Activated CD4-positive, alpha-beta T cell treated with anti-CD3 and anti-CD28 coated beads for 36 hours (primary cell): ENCODE measurements at regions of chr19 and their contacts with region 1.

Region 1: DNA sequence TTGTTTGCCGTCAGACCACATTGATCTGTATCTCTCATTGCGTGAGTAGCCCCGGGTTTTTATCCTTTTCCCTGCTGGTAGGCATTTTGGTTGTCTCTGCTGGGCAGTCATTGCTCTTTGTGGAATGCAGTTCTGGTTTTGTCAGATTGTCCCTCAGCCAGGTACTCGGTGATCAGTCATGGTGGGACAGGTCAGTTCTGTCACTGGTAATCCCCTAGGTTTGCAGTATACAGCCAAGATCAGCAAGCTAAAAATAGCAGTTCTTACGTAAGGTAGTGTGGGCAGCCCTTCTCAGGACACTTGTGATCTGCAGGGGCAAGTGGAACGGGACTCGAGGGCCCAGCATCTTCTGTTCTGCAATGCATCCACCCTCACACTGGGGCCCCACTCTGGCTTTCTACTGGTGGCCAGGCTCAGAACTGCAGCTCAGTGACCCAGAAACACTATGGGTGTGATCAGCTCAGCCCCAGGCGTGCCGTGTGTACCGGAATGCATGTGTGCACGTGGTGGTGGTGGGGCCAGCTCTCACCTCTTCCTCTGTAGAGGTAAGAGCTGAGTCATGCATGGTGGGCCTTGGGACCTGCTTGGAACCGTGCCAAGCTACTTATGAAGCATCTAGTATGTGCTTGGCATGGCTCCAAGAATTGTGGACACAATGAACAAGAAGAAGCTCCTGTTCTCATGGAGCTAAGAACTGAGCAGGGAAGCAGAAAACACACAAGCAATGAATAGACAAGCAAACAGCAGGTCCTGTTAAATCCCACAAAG is 6.3 kb downstream of the PLEKHF1 start:
- DNase-seq: peak; percentile 94
- ATAC-seq: peak; percentile 70
- H3K4me3 Mint-ChIP-seq: peak overlapping the region; percentile 59
- H3K27ac Mint-ChIP-seq: peak overlapping the region; percentile 96
- H3K4me1 Mint-ChIP-seq: peaks cover 90% of the 10 kb centered on the region
- H3K27me3 Mint-ChIP-seq: no peaks in the 10 kb centered on the region

Region 2: DNA sequence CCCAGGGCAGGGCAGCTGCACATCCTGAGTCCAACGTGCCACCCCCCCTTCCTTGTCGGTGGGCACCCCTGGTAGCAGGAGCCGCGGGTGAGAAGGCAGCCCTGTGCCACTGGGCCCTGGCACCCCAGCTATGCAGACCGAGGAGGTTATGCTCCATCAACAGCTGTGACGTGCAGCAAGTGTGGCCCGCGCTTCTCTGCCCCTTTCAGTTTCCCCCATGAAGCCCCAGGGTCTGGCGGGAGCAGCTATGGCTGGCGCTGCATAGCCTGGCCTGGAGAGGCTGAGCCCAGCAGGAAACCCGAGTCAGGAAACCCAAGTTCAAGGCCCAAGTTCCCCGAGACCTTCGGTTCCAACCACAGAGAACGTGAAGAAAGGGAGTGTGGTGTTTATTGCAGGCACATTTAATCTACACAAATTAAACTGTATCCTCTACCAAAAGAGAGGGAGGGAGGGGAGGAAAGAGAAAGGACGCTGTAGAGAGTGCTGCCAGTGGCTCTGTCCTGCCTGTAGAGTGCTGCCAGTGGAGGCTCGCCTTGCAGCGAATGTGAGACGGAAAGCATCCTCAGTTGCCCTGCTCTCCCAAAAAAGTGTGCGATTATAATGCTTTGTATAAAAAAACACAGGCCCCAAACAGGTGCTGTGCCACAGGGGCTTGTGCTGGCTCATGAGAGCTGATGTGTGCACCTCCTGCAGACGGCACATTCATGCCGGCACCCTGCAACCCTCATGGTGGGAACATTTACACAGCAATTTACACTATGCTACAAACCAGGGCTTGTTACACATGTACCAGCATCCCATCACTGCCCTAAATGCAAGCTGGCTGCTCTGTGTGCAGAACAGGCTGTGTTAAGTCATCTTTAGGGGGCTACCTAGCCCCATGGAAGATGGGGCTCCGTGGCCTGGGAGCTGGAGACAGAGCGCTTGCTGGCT is 49.2 kb before region 1 on chr19:
- CTCF ChIA-PET with region 1: interaction called, 13 read pairs
- POLR2A ChIA-PET with region 1: no interaction called
- intact Hi-C with region 1: loop called (anchors 1 to 2 kb)
- DNase-seq: peak; percentile 65
- ATAC-seq: peak; percentile 53
- H3K4me3 Mint-ChIP-seq: peak overlapping the region; percentile 20
- H3K27ac Mint-ChIP-seq: peak overlapping the region; percentile 63
- H3K4me1 Mint-ChIP-seq: peaks cover 51% of the 10 kb centered on the region
- H3K27me3 Mint-ChIP-seq: no peaks in the 10 kb centered on the region

Region 3: GRCh38 chr19:29687244-29687896 is 15.8 kb after region 1 on chr19:
- CTCF ChIA-PET with region 1: interaction called, 18 read pairs
- POLR2A ChIA-PET with region 1: interaction called, 13 read pairs
- intact Hi-C with region 1: loop called (anchors 1 to 2 kb)
- DNase-seq: peak; percentile 84
- ATAC-seq: peak; percentile 87
- H3K4me3 Mint-ChIP-seq: no peak overlapping the region
- H3K27ac Mint-ChIP-seq: peak overlapping the region; percentile 86
- H3K4me1 Mint-ChIP-seq: peaks cover 51% of the 10 kb centered on the region
- H3K27me3 Mint-ChIP-seq: no peaks in the 10 kb centered on the region

Region 4: DNA sequence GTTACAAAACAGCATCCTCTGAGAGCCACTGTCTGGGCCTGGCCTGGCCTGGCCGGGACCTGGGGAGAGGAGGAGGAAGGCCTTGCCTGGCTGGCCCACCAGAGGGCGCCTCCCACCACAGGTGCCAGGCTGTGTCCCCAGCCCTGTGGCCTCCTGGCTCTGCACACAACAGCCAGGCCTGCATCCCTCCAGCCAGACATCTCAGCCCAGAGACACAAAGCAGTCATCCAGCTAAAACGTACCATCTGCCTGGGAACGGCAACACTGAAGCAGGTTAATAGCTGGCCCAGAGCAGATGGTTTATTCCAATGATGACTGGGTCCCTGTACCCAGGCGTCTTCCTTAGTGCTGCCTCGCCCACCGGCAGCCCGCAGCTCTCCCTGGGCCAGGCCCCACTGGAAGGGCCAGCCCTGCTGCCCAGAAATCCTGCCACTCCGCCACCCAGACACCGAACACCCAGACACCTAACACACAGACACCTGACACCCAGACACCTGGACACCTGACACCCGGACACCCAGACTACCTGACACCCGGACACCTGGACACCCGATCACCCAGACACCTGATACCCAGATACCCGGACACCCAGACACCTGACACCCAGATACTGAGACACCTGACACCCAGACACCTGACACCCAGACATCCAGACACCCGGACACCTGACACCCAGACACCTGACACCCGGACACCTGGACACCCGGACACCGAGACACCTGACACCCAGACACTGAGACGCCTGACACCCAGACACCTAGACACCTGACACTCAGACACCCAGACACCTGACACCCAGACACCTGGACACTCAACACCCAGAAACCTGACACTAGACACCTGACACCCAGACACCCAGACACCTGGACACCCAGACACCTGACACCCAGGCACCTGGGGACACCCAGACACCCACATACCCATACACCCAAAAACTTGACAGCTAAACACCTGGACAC is 23.4 kb after region 1 on chr19:
- CTCF ChIA-PET with region 1: interaction called, 17 read pairs
- POLR2A ChIA-PET with region 1: no interaction called
- intact Hi-C with region 1: no loop called
- DNase-seq: peak; percentile 92
- ATAC-seq: peak; percentile 97
- H3K4me3 Mint-ChIP-seq: no peak overlapping the region
- H3K27ac Mint-ChIP-seq: peak overlapping the region; percentile 53
- H3K4me1 Mint-ChIP-seq: peaks cover 12% of the 10 kb centered on the region
- H3K27me3 Mint-ChIP-seq: no peaks in the 10 kb centered on the region

Region 5: GRCh38 chr19:29704562-29705558 is 33.3 kb after region 1 on chr19:
- CTCF ChIA-PET with region 1: interaction called, 4 read pairs
- POLR2A ChIA-PET with region 1: interaction called, 3 read pairs
- intact Hi-C with region 1: loop called in 1 of 2 experiments (anchors 1 kb)
- DNase-seq: peak; percentile 51
- ATAC-seq: peak; percentile 90
- H3K4me3 Mint-ChIP-seq: peak overlapping the region; percentile 26
- H3K27ac Mint-ChIP-seq: peak overlapping the region; percentile 97
- H3K4me1 Mint-ChIP-seq: peaks cover 49% of the 10 kb centered on the region
- H3K27me3 Mint-ChIP-seq: no peaks in the 10 kb centered on the region

Region 6: DNA sequence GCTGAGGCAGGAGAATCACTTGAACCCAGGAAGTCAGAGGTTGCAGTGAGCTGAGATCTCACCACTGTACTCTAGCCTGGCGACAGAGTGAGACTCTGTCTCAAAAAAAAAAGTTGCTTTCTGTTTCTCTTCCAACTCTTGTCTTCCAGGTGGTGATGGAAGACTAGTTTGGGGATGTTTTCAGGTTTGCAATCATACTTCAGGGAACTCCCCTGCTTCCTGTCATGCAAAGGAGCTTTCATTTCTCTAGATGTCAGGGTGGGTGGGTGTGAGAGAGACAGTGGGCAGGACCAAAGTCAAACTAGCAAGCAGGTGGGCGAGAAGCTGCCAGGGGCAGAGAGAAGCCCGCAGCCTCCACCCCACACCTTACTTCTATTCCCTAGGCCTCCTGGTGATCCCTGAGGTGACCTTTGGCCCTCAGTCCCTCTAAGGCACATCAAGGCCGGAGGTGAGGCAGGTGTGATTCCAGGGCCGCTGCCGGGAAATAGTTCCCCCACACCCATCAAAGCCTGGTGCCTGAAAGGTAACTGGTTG is 165.9 kb after region 1 on chr19:
- CTCF ChIA-PET with region 1: interaction called, 3 read pairs
- POLR2A ChIA-PET with region 1: no interaction called
- intact Hi-C with region 1: loop called in 1 of 2 experiments (anchors 5 kb)
- DNase-seq: peak; percentile 76
- ATAC-seq: peak; percentile 81
- H3K4me3 Mint-ChIP-seq: peak overlapping the region; percentile 51
- H3K27ac Mint-ChIP-seq: peak overlapping the region; percentile 99
- H3K4me1 Mint-ChIP-seq: peaks cover 52% of the 10 kb centered on the region
- H3K27me3 Mint-ChIP-seq: no peaks in the 10 kb centered on the region